ENCODE measurements at regions of chr10 and their contacts with region 1.

Region 1: GRCh38 chr10:132023092-132023811 is 41.5 kb upstream of the BNIP3 start:
- DNase-seq: peak; percentile 68 to 98 (median 90)

Region 2: DNA sequence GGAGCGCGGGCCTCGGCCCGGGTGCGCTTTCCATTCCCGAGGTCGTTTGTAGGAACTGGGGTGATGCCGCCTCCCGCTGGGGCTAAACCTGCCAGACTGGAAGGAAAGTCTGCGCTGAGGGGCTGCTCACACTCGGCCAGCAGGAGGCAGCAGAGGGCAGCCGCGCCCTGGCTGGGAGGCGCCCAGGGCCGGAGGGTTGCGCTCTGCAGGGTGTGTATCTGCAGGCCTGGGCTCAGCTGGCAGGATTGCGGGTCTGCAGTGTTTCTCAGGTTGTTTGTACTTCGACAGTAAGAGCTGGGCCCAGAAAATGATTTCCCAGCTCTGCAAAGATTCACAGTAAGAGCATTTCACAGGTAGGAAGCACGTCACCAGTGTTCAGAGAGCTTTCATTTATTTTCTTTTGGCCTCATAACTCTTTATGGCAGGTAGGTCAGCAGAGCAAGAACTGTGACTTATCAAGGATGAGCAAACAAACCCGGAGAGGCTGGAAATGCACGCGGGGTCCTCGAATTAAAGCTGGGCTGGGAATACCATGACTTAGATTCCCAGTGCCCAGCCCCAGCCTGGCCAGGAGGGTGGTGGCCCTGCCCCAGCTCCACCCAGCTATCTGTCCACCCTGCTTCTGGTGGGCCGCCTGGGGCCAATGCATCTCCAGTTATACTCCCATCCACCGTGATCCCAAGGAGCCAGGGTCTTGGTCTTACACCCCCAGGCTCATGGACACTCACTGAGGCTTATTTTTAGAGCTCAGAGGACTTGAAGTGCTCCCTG is 137.7 kb before region 1 on chr10:
- intact Hi-C with region 1: loop called (anchors 2 kb)
- DNase-seq: peak; percentile 41 to 96 (median 73)

Region 3: GRCh38 chr10:131961777-131962662 is 61.2 kb before region 1 on chr10:
- intact Hi-C with region 1: loop called (anchors 10 kb)
- DNase-seq: peak in 5 of 10 donors; percentile 31 to 90 (median 83)

Region 4: DNA sequence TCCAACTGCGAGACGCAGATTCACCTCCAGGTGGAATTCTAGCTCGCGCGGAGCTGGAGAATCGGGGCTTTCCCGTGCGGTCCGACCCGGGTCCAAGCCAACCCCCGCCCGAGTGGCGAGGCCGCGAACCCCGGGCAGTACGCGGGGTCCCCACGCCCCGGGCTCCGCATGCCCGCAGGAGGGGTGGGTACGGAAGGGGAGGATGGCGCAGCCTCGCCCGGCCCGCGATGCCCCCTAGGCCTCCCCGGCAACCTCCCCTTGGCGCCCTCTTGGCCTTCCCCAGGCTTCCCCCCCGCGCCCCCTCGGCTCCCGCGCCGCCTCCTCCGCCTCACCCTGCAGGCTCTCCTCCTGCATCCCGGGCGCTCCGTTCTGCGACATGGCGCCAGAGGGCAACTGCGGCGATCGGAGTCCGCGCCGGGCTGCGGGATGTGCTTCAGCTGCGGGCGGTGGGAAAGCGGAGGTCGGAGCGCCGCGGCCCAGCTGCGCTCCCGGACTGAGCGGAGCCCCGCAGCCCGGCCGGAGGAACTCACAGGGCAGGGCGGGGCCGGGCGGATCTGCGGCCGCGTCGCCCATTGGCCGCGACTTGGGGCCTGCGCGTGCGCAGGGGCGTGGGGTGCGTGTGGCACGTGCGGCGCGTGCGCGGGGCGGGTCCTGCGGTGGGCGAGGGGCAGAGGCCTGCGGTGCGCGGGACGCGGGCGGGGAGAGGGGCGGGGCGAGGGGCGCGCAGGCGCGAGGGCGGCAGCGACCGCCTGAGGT is 41.6 kb before region 1 on chr10 and contains the start of gene BNIP3:
- intact Hi-C with region 1: loop called (anchors 1 kb)
- DNase-seq: peak; percentile 86 to 99 (median 92)

Region 5: DNA sequence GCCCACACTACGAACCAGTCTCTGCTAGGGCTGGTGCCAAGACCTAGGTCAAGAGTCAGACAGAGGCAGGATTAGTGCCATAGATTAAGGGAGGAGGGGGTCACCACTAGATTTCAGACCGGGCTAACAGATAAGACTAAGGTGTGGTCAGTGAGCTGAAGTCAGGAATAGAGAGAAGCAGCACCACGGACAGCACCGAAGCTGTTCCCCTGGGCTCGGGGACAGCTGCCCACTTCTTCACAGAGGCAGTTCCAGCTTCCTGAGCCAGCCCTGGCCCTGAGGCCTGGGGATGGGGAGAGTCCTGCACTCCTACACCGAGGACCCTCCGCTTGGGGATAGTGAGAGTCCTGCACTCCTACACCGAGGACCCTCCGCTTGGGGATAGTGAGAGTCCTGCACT is 31.3 kb after region 1 on chr10:
- intact Hi-C with region 1: no loop called
- DNase-seq: peak in 3 of 10 donors; percentile 7 to 49 (median 13)